Spleen (tissue), 13 donors: ENCODE measurements at regions of chr4 and their contacts with region 1.

Region 1: DNA sequence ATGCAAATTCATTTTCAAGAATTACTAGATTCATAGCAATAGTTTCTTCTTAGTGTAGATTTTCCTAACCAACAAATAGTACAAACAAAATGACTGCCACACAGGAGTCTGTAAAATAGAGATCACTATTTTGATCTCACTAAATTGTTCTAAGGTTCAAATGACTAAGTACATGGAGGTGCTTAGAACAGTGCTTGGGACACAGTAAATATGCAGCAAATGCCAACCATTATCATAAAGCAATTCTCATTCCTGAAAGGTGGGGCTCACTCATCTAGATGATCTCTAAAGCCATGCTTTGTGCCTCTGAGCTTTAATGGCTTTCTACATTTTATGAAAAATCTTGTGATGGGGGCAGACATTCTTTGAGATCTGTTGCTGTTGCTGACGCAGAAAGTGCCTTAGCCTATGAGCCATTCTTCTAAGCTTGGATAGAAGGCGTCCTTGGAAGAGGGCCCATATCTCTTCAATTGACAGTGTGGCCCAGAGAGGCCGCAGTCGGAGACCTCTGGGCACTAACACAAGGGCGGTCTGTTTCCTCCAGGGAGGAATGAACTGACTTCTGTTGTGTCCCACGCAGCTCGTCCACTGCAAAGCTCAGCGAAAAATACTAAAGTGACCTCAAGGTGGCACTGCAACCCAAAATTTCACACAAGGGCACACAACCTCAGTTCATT is 23.5 kb downstream of the TLR10 start:
- DNase-seq: no peak
- H3K4me3 ChIP-seq: no peak overlapping the region
- H3K27ac ChIP-seq: peak overlapping the region in 7 of 8 donors; percentile 9 to 91 (median 86)
- H3K4me1 ChIP-seq: peaks cover 6 to 74% (median 50%) of the 10 kb centered on the region in 6 donors
- H3K27me3 ChIP-seq: no peaks in the 10 kb centered on the region
- CTCF ChIP-seq: peak; percentile 34 to 85 (median 80)
- POLR2A ChIP-seq: no peak

Region 2: GRCh38 chr4:38856524-38857337 is 97.5 kb after region 1 on chr4 and contains the start of gene TLR6:
- intact Hi-C with region 1: loop called (anchors 5 kb)
- DNase-seq: no peak
- H3K4me3 ChIP-seq: peak within 1 kb of the TSS; percentile 23 to 68 (median 36)
- H3K27ac ChIP-seq: peak within 1 kb of the TSS; percentile 78 to 93 (median 91)
- H3K4me1 ChIP-seq: peaks cover 20 to 76% (median 44%) of the 10 kb centered on the region in 6 donors
- H3K27me3 ChIP-seq: no peaks in the 10 kb centered on the region
- CTCF ChIP-seq: peak; percentile 62 to 91 (median 82)
- POLR2A ChIP-seq: no peak
- total RNA-seq, gene TLR6: 23.2 to 55.1 (median 37.5) TPM

Region 3: DNA sequence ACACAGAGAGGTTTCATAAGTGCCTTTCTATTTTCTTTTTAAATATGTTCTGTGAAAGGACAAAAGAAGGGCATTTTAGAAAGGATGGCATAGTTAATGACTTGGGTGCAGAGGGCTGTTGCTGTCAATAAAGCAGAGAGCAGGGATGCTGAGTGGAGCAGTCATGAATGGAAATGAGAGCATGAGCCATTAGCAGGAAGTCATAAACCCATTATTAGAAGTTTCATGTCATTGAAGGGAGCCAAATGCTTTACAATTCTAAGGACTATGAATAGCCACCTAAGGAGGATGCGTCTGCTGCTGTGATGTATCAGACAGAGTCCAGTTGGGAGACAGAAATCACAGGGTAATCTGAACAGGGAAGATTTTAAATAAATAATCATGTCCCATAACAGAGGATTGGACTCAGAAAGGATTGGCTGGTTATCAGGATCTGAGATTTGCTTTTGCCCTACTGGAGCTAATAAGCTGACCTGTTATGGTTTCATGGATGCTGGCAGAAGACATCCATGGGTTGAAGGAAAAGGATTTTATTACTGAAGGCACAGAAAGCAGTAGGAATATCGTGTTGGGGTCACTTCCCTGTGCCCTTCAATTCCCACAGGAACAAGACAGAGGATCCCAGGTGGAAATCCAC is 375.6 kb after region 1 on chr4:
- intact Hi-C with region 1: loop called (anchors 5 kb)
- DNase-seq: no peak
- H3K4me3 ChIP-seq: peak overlapping the region in 1 of 8 donors; percentile 21
- H3K27ac ChIP-seq: no peak overlapping the region
- H3K4me1 ChIP-seq: peaks cover 0 to 15% (median 8%) of the 10 kb centered on the region in 6 donors
- H3K27me3 ChIP-seq: no peaks in the 10 kb centered on the region
- CTCF ChIP-seq: no peak
- POLR2A ChIP-seq: no peak

Region 4: GRCh38 chr4:39514888-39515401 is 755.7 kb after region 1 on chr4:
- intact Hi-C with region 1: no loop called
- DNase-seq: no peak
- H3K4me3 ChIP-seq: no peak overlapping the region
- H3K27ac ChIP-seq: no peak overlapping the region
- H3K4me1 ChIP-seq: no peaks in the 10 kb centered on the region
- H3K27me3 ChIP-seq: no peaks in the 10 kb centered on the region
- CTCF ChIP-seq: no peak
- POLR2A ChIP-seq: no peak